Left cardiac atrium (tissue), 4 donors: ENCODE measurements at regions of chr19 and their contacts with region 1.

Region 1: DNA sequence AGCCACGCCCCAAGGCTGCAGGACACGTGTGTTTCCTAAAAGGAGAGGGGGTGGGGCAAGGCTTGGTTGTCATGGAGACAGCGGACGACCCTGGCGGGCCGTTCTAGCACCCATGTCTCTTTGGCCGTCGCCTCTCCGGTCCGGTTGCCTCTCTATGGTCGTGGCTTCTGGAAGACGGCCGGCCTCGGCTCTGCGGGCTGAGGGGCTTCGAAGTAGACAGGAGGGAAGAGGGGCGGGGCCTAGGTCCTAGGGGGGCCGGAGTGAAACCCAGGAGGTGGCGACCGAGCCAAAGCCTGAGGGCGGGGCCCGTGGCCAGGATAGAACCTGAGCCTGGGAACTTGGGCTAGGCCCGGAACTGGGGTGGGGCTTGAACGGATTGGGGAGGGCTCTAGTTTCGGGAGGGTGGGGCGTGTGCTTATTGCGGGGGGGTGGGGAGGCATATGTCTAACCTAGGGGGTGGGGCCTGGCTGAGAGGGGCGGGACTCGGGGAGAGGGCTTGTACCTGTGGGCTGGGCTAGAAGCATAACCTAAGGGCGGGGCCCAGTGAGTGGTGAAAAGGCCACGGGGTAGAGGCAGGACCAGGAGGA is 750 bp upstream of the SLC27A1 start:
- DNase-seq: peak; percentile 96
- ATAC-seq: peak; percentile 75 to 87

Region 2: DNA sequence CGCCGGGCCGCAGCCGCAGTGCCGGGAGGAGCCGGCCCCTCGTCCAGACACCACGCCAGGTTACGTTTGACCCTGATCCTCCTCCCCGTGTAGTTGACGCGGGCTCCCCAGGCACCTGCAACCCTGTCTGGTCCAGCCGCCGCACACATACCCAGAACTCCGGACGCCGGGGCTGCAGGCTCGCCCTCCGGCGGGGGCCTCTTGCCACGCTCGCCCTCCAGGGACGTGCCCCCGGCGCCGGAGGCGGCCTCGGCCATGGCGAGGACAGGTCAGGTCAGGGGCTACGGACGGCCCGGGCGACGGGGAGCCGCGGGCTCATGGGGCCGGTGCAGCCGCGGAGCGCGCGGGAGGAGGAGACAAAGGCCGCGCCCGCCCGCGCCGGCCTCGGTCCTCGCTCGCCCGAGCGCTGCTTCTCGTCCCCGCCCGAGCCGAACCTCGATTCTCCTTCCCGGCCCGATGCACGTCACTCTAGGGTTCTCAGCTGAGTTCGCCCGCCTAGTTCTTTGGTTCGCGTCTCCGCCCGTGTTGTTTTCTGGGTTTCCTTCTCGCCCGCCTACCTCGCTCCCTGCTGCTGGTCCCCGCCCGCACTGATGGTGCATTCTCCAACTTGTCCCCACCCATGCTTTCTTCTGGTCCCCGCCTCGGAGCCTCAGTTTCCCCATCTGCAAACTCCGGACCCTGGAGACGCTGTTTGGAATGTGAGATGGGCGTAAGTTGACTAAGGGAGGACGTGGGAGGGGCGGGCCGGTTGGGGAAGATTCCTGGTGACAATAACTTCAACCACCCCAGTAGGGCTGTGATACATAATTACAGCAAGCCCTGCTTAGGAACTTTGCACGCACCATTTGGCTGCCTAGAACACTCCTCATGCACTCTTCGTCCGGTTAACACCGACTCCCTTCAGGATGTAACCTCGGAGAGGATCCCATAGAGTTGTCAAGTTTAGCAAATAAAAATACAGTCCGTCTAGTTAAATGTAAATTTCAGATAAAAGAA is 134.9 kb before region 1 on chr19 and contains the start of gene ANO8:
- intact Hi-C with region 1: no loop called
- DNase-seq: peak; percentile 96
- ATAC-seq: peak; percentile 80 to 82
- total RNA-seq, gene ANO8: 9.5 to 10.0 TPM

Region 3: DNA sequence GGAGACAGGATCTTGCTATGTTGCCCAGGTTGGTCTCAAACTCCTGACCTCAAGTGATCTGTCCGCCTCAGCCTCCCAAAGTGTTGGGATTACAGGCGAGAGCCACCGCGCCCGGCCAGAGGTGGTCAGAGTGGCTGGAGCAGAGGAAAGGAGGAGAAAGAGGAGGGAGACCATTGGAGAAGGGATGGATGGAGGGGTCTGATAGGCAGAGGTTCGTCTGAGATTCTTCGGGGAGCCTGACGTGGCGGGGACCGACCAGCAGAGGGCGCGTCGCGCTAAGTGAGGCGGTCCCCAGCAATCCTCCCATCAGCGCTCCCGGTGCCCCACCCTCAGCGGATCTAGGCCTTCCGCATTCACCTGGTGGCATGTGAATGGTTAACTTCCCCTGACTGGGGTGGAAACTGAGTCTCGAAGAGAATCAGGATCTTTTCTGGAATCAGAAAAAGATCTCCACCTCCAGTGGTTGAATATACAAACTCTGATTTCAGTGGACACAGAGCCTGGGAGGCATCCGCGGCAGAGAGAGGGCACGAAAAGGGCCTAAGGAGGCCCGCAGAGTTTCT is 123.4 kb before region 1 on chr19:
- intact Hi-C with region 1: loop called in 1 of 2 experiments (anchors 5 kb)
- DNase-seq: peak; percentile 82
- ATAC-seq: peak; percentile 82 to 84

Region 4: GRCh38 chr19:17680235-17680722 is 210.7 kb after region 1 on chr19:
- intact Hi-C with region 1: no loop called
- DNase-seq: peak; percentile 89
- ATAC-seq: peak; percentile 95 to 96